Motor neuron (in vitro differentiated cells): ENCODE measurements at regions of chr1 and their contacts with region 1.

Region 1: GRCh38 chr1:94541175-94542087 is at the start of gene F3:
- ATAC-seq: peak; percentile 75 to 97 (median 96)
- H3K4me3 ChIP-seq: peak within 1 kb of the TSS; percentile 47 to 69 (median 50)
- H3K27ac ChIP-seq: peak within 1 kb of the TSS in 1 of 2 donors; percentile 2
- H3K4me1 ChIP-seq: no peaks in the 10 kb centered on the region
- total RNA-seq, gene F3: 1.2 to 265 (median 3.2) TPM

Region 2: DNA sequence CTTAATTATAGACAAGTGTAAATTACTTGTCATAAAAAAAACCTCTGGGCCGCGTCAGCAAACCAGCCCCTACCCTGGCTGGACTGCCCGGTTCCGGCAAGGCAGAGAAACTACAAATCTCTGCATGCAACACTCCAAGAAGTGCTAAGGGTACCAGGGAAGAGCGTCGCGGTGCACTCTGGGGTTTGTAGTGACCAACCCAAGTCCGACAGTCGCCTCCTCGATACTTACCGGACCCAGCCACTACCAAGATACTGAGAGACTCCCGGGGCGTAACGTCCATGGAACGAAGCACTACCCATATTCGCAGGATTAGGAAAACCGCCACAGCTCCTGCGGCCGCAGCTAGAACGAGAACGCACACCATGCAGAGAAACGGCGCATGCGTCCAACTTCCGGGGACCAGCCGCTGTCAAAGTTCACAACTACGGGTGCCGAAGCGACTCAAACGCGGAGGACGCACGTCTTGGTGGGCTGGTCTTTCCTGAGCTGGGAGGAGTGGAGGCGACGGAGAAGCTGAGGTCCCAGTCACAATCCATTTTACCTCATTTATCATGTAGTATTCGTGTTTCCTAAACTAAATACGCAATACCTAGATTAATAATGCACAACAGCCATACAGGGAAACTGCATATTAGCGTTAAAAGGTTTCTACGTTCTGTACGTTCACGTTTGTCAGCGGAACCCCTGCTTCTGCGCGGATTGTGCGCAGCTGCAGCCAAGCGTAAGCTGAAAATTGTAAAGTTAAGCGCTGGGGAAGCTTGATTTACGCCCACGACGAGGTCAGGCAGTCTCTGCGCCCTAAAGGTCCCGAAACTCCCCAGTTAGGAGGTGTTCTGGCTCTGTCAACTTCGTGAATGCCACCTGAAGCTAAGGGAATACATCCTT is 531.3 kb after region 1 on chr1 and contains the start of gene ALG14:
- in situ Hi-C with region 1: loop called in 1 of 9 experiments (anchors 25 kb)
- ATAC-seq: peak; percentile 95 to 99 (median 99)
- H3K4me3 ChIP-seq: peak within 1 kb of the TSS; percentile 78 to 98 (median 87)
- H3K27ac ChIP-seq: peak within 1 kb of the TSS; percentile 99
- H3K4me1 ChIP-seq: peaks cover 5 to 15% of the 10 kb centered on the region in 2 donors
- total RNA-seq, gene ALG14: 1.4 to 7.4 (median 3.2) TPM

Region 3: DNA sequence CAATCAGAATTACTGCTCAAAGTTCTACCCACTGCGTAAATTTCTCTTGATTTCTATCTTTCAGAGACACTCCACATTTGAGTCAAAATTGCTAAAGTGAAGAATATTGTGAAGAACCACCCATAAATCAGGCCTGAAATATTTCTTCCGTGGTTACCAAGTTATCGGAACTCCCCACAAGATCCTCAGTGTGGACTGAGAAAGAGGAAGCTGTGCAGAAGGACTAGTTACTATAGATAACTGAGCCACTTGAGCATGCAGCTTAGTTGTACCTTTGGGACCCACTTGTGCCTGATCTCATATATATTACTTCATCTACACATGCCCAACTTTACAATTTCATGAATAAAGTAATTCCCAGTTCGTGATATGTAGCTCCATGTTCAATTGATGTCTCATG is 711.0 kb after region 1 on chr1:
- in situ Hi-C with region 1: no loop called
- ATAC-seq: no peak
- H3K4me3 ChIP-seq: no peak overlapping the region
- H3K27ac ChIP-seq: no peak overlapping the region
- H3K4me1 ChIP-seq: peaks cover 0 to 8% of the 10 kb centered on the region in 2 donors